Motor neuron (in vitro differentiated cells): ENCODE measurements at regions of chr7 and their contacts with region 1.

Region 1: DNA sequence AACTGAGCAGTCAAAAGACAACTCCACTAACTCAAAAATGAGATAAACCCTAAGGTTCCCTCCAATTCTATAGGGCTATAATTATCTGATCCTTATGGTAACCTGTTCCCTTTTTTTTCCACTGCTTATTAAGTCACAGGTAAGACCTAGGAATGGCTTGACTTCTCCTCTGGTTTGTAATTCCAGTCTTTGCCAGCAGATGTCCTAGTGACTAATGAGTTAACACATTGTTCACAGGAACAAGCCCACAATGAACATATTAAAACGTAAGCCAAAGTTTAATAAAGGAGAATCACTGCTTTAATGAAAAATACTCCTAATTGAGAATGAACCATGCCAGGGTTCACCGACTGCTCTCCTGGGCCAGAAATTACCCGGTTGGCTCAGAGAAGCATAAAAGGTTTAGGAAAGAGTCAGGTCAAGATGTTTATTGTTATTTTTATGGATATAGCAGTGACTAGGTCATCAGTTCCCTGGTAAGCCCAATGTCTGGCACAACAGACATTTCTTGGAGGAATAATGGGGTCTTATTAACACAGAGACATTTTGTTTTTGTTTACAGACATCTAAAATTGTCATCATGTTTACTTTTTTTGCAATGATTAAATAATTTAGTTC is 120.1 kb downstream of the ELAPOR2 start:
- ATAC-seq: peak in 6 of 8 experiments; percentile 33 to 87 (median 54)
- H3K4me3 ChIP-seq: no peak overlapping the region
- H3K27ac ChIP-seq: no peak overlapping the region
- H3K4me1 ChIP-seq: peaks cover 0 to 3% of the 10 kb centered on the region in 2 donors

Region 2: GRCh38 chr7:86558680-86559501 is 380.4 kb before region 1 on chr7:
- in situ Hi-C with region 1: no loop called
- ATAC-seq: peak in 6 of 8 experiments; percentile 25 to 97 (median 75)
- H3K4me3 ChIP-seq: no peak overlapping the region
- H3K27ac ChIP-seq: no peak overlapping the region
- H3K4me1 ChIP-seq: peaks cover 0 to 12% of the 10 kb centered on the region in 2 donors

Region 3: DNA sequence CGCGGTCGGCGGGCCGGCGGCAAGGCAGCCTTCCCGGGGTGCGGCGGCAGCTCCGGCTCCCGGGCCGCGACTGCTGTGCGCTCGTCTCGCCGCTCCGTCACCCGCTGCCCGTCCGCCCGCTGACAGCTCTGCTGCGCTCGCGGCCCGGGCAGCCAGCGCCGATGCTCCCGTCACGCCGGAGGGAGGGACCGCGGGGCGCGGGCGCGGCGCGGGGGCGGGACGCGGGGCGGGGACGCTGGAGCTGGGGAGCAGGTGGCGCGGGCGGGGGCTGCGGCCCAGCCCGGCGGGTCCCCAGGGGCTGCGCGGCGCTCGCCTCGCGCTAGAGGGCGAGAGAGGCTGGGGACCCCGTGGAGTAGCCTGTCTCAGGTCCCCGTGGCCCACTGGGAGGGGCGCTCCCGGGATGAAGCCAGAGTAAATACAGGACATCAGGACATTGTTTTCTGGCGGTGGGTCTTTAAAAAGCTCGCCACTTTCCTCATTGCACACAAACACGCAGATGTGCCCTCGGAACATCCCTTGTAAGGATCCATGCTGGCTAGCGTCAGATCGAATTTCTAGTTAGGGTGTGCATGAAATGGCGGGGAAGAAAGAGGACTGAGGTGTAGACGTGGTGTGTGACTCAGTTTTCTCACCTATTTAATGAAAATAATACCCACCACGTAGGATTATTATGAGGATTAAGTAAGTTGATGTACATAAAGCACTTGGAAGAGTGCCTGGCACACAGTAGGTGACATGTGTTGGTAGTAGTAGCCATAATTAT is 120.4 kb after region 1 on chr7 and contains the start of gene ELAPOR2:
- in situ Hi-C with region 1: loop called in 1 of 9 experiments (anchors 25 kb)
- ATAC-seq: peak; percentile 96 to 98 (median 97)
- H3K4me3 ChIP-seq: peak within 1 kb of the TSS; percentile 59 to 92 (median 72)
- H3K27ac ChIP-seq: peak within 1 kb of the TSS; percentile 76 to 77
- H3K4me1 ChIP-seq: peaks cover 14 to 16% of the 10 kb centered on the region in 2 donors
- total RNA-seq, gene ELAPOR2: 0.46 to 50.1 (median 39.9) TPM

Region 4: DNA sequence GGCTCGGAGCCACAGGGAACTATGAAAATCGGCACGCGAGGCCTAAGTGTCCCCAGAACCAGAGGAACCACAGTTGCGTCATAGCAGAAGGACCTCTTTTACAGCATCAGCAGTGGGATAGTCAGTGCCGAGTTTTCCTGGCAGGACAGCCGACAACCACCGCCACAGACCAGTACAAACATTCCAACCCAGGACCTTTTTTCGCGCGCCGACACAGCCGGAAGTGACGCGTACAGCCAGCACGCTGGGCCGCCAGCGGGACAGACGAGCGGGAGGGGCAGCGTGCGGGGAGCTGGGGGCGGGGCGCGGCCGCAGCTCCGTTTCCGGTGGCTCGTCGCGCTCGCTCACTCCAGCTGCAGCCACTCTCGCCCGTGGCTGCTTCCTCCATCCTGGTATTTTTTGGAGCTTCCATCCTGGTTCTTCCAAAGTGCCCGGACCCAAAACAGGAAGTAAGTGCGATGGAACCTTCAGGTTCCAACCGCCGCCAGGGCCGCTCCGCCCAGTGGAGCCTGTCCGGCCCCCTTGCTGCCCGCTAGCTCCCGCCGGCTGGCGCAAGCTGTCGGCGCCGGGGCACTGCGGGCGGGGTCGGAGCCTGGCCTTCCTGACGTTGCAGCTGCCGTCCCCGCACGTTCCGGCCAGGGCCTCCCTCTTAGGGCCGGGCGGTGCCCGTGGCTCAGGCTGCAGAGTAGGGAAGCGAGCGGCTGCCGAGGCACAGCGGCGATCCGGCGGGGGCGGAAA is 213.0 kb after region 1 on chr7 and contains the start of gene DMTF1:
- in situ Hi-C with region 1: loop called in 4 of 9 experiments (anchors 10 to 25 kb)
- ATAC-seq: peak; percentile 80 to 89 (median 88)
- H3K4me3 ChIP-seq: peak within 1 kb of the TSS; percentile 74 to 95 (median 80)
- H3K27ac ChIP-seq: peak within 1 kb of the TSS; percentile 97 to 98
- H3K4me1 ChIP-seq: peaks cover 11 to 20% of the 10 kb centered on the region in 2 donors
- total RNA-seq, gene DMTF1: 45.9 to 141 (median 106) TPM

Region 5: DNA sequence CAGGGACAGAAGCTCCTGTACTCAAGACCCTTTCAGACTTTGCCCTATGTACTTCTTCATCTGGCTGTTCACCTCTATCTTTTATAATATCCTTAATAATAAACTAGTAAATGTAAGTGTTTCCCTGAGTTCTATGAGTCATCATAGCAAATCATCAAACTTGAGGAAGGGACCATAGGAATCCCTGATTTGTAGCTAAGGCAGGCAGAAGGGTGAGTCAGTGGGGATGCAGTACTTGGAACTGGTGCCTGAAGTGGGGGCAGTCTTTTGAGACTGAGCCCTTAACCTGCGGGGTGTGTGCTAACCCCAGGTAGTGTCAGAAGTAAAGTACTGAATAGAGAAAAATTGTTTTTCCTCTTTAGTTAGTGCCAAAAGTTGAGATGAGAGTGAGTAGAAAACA is 286.4 kb after region 1 on chr7:
- in situ Hi-C with region 1: loop called in 2 of 9 experiments (anchors 25 kb)
- ATAC-seq: no peak
- H3K4me3 ChIP-seq: no peak overlapping the region
- H3K27ac ChIP-seq: no peak overlapping the region
- H3K4me1 ChIP-seq: peaks cover 0 to 6% of the 10 kb centered on the region in 2 donors

Region 6: DNA sequence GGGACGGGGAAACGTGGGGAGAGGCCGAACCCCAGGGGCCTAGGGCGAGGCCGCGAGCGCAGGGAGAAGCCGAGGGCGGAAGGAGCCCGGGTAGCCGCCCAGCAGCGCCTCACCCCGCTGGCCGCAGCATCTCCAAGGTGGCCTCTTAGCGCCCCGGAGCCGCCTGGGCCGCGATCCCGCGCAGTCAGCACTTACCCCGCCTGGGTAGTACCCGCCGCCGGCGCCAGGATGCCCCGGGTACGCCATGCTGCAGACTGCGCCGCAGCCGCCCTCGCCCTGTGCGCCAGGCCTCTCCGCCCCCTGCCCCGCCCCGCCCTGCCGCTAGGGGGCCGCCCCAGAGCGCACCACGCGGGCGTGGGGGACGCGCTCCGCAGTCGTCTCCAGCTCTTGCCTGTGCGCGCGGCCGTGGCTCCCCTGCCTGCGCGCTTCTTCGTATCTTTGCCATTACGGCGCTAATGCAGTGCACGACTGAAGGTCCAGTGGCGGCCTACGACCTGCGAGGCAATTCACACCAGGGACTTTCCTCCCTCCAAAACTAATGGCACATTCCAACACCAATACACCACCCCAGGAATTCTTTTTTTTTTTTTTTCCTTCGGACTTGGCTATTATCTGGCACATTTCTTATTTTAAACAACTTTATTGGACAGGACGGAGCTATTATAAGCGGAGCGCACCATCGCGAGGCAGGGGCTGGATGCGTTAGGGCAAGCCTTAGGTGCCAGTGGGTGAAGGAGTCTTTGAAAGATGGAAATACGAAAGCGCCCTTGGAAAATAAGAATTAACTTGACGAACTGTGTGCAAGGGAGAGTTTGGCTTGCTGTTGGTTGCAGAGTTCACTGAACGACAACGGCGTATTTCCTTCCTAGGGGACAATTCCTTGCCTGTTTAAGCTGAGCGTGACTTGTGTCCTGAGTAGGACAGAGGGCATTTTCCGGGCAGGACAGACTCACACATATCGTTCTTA is 1280.8 kb after region 1 on chr7 and contains the start of gene SRI:
- in situ Hi-C with region 1: no loop called
- ATAC-seq: peak; percentile 92 to 96 (median 94)
- H3K4me3 ChIP-seq: peak within 1 kb of the TSS; percentile 53 to 84 (median 72)
- H3K27ac ChIP-seq: peak within 1 kb of the TSS; percentile 76 to 96
- H3K4me1 ChIP-seq: peaks cover 7 to 13% of the 10 kb centered on the region in 2 donors
- total RNA-seq, gene SRI: 38.7 to 119 (median 61.1) TPM